Naive thymus-derived CD8-positive, alpha-beta T cell (primary cell): ENCODE measurements at regions of chr1 and their contacts with region 1.

Region 1: GRCh38 chr1:39901698-39902459 is at the start of gene MYCL:
- DNase-seq: peak; percentile 46 to 79 (median 60)
- ATAC-seq: peak; percentile 82 to 83
- H3K4me3 Mint-ChIP-seq: peak within 1 kb of the TSS; percentile 67 to 84 (median 78)
- H3K27ac Mint-ChIP-seq: no peak within 1 kb of the TSS
- H3K4me1 Mint-ChIP-seq: peaks cover 0 to 10% (median 5%) of the 10 kb centered on the region in 4 donors
- H3K27me3 Mint-ChIP-seq: peaks cover 15 to 77% (median 46%) of the 10 kb centered on the region in 5 donors
- polyA plus RNA-seq, gene MYCL: not detected

Region 2: DNA sequence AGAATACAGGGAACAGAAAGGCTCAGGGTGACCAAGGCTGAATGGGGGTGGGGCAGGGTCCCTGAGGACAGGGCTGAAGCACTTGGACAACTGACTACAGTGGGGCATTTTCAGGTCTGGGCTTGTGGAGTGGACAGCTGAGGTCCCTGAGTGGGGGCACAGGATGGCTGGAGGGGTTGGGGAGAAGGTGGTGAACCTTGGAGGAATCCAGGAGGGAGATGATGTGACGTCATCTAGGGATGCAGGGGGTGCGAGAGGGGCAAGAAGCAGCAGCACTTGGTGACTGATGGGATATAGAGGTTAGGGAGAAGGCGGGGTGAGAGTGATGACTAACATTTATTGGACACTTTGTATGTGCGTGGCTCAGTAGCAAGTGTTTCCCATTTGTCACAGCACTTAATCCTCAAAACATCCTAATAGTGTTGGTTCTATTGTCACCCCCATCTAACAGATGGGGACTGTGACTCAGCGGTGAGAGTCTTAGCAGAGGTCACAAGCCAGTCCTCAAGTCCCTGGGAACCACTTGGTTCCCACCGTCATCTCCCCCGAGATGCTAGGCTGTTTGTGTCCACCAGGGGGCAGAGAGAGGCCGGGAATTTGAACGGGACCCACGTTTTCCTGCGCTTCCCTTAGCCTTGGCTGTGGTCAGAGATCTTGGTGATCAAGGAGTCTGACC is 85.3 kb before region 1 on chr1:
- POLR2A ChIA-PET with region 1: interaction called, 12 read pairs
- DNase-seq: peak; percentile 18 to 71 (median 47)
- ATAC-seq: peak; percentile 54 to 65
- H3K4me3 Mint-ChIP-seq: peak overlapping the region; percentile 42 to 90 (median 76)
- H3K27ac Mint-ChIP-seq: peak overlapping the region in 2 of 10 donors; percentile 18 to 89
- H3K4me1 Mint-ChIP-seq: peaks cover 9 to 27% (median 20%) of the 10 kb centered on the region in 4 donors
- H3K27me3 Mint-ChIP-seq: peaks cover 7 to 58% (median 30%) of the 10 kb centered on the region in 5 donors